ENCODE measurements at regions of chr14 and their contacts with region 1.

Region 1: DNA sequence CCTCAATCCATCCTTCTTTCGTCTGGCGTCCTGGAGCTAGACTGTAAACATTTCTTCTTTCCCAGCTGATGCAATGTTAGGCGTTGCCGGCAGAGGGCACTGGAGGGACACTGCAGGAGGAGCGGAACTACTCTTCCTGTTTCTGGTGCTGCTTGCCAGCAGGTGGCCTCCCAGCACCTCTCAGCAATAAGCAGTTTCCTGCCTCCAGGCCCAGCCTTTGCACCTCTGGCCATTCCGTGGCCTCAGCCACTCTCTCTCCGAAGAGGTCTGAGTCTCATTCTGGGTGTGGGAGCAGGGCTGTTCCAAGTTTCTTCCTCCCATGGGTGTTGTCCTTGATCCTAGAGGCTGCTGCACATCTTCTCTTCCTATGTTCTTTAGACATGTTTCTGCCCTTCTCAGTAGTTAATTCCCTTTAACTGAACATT is 7.5 kb upstream of the ASPG start:
- DNase-seq: peak; percentile 81 to 83 (median 81)
- ATAC-seq: peak; percentile 100
- H3K4me3 ChIP-seq: no peak overlapping the region
- H3K27ac ChIP-seq: no peak overlapping the region
- H3K4me1 ChIP-seq: no peaks in the 10 kb centered on the region
- H3K27me3 ChIP-seq: peaks cover 0 to 10% of the 10 kb centered on the region in 2 experiments; a peak in 1 of 5 replicates
- CTCF ChIP-seq: peak; percentile 99 to 100 (median 99)
- EP300 ChIP-seq: no peak
- POLR2A ChIP-seq: no peak
- RAD21 ChIP-seq: peak; percentile 89 to 97

Region 2: DNA sequence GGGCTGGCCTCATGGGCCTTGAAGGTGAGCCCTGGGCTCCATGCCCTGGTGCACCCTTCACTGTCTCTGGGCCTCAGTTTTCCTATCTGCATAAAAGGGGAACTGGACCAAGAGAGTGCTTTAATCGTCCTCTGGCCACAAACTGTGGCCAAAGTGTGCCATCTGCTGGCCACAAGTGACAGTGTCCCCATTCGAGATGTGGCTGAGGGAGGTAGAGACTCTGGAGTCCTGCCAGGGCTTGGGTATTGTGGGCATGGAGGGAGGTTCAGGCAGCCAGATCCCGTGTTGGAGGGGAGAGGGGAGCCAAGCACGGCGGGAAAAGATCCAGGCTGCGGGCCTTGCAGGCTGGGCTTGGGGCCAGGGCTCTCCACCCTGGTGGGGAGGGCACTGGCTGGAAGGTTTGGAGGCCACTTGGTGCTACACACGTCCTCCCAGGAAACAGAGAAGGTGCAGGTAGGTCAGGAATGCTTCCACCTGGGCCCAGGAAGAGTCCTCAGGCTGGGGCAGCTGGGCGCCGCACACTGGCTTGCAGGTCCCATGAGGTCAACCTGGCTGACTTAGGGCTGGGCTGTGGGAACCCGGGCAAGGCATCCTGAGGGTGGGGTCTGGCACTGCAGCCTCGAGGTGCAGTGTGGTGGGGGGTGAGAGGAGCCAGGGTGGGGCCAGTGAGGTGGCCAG is 53.1 kb after region 1 on chr14:
- CTCF ChIA-PET with region 1: interaction called, 24 read pairs
- POLR2A ChIA-PET with region 1: no interaction called
- in situ Hi-C with region 1: no loop called
- intact Hi-C with region 1: loop called (anchors 2 kb)
- DNase-seq: no peak
- ATAC-seq: no peak
- H3K4me3 ChIP-seq: no peak overlapping the region
- H3K27ac ChIP-seq: no peak overlapping the region
- H3K4me1 ChIP-seq: no peaks in the 10 kb centered on the region
- H3K27me3 ChIP-seq: no peaks in the 10 kb centered on the region
- CTCF ChIP-seq: peak; percentile 56 to 61 (median 58)
- EP300 ChIP-seq: no peak
- POLR2A ChIP-seq: no peak
- RAD21 ChIP-seq: peak in 1 of 2 experiments; percentile 63; a peak in 2 of 4 replicates

Region 3: GRCh38 chr14:104639889-104640548 is 562.0 kb after region 1 on chr14:
- CTCF ChIA-PET with region 1: interaction called, 11 read pairs
- POLR2A ChIA-PET with region 1: interaction called, 3 read pairs
- in situ Hi-C with region 1: loop called (anchors 10 kb)
- intact Hi-C with region 1: loop called (anchors 1 kb)
- DNase-seq: peak; percentile 73 to 83 (median 80)
- ATAC-seq: peak; percentile 99
- H3K4me3 ChIP-seq: no peak overlapping the region
- H3K27ac ChIP-seq: no peak overlapping the region
- H3K4me1 ChIP-seq: peaks cover 0 to 37% of the 10 kb centered on the region in 2 experiments; a peak in 2 of 5 replicates
- H3K27me3 ChIP-seq: peaks cover under 1 to 36% of the 10 kb centered on the region in 2 experiments; a peak in 4 of 5 replicates
- CTCF ChIP-seq: peak; percentile 83 to 89 (median 88)
- EP300 ChIP-seq: no peak
- POLR2A ChIP-seq: no peak
- RAD21 ChIP-seq: peak; percentile 89 to 93

Measured in K562 (cell line).